CD14-positive monocyte (primary cell): ENCODE measurements at regions of chr14 and their contacts with region 1.

Region 1: GRCh38 chr14:70692226-70692625 is 50.5 kb downstream of the TTC9 start:
- DNase-seq: peak; percentile 83 to 91 (median 90)
- H3K4me3 ChIP-seq: no peak overlapping the region
- H3K4me3 Mint-ChIP-seq: peak overlapping the region in 1 of 2 donors; percentile 65
- H3K27ac ChIP-seq: peak overlapping the region; percentile 81 to 90
- H3K27ac Mint-ChIP-seq: peak overlapping the region; percentile 81 to 91 (median 88)
- H3K4me1 ChIP-seq: peaks cover 20 to 28% of the 10 kb centered on the region in 2 donors
- H3K4me1 Mint-ChIP-seq: peaks cover 20% of the 10 kb centered on the region
- H3K27me3 ChIP-seq: no peaks in the 10 kb centered on the region
- H3K27me3 Mint-ChIP-seq: peaks cover 0 to 2% (median 0%) of the 10 kb centered on the region in 3 donors
- CTCF ChIP-seq: no peak

Region 2: GRCh38 chr14:70640938-70641547 is 51.2 kb before region 1 on chr14:
- intact Hi-C with region 1: loop called in 1 of 2 experiments (anchors 5 kb)
- DNase-seq: peak in 2 of 3 donors; percentile 47 to 59
- H3K4me3 ChIP-seq: peak overlapping the region; percentile 36 to 87 (median 40)
- H3K4me3 Mint-ChIP-seq: peak overlapping the region; percentile 85 to 96
- H3K27ac ChIP-seq: no peak overlapping the region
- H3K27ac Mint-ChIP-seq: peak overlapping the region in 3 of 7 donors; percentile 14 to 65 (median 40)
- H3K4me1 ChIP-seq: peaks cover 25 to 27% of the 10 kb centered on the region in 2 donors
- H3K4me1 Mint-ChIP-seq: peaks cover 25% of the 10 kb centered on the region
- H3K27me3 ChIP-seq: peaks cover 28 to 55% of the 10 kb centered on the region in 2 donors
- H3K27me3 Mint-ChIP-seq: peaks cover 36 to 47% (median 42%) of the 10 kb centered on the region in 3 donors
- CTCF ChIP-seq: no peak

Region 3: DNA sequence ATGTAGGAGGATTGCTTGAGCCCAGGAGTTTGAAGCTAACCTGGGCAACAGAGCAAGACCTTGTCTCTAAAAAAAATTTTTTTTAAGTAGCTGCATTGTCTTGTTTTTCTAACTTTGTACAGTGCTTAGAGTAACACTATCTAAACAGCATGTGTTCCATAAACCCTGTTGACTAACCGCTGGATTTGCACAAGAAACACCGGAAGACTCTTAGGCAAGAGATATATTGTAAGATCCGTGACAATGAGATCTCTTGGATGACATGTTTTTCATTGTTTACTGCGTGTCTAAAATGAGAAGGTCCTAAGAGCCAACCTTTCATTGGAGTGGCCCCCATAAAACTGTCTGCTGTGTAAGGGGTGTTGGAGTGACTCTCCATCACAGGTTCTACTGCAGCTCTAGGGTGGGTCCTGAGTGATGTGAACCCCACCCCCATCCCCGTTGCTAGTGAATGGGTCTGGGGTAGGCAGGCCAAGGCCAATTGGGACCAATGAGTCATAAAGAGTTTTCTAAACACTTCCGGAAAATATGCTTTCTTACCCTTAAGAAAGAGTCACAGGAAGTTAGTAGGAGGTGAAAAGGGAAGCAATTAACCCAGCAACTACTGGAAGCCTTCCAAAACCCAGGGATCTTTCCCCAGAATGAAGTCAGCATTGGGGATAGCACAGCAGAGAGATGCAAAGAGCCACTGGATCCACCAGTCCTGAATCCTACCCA is 190.7 kb after region 1 on chr14:
- intact Hi-C with region 1: no loop called
- DNase-seq: peak; percentile 86 to 98 (median 96)
- H3K4me3 ChIP-seq: peak overlapping the region in 1 of 3 experiments; percentile 58
- H3K4me3 Mint-ChIP-seq: peak overlapping the region; percentile 50 to 72
- H3K27ac ChIP-seq: peak overlapping the region; percentile 87 to 99
- H3K27ac Mint-ChIP-seq: peak overlapping the region; percentile 98 to 100 (median 99)
- H3K4me1 ChIP-seq: peaks cover 85 to 90% of the 10 kb centered on the region in 2 donors
- H3K4me1 Mint-ChIP-seq: peaks cover 90% of the 10 kb centered on the region
- H3K27me3 ChIP-seq: no peaks in the 10 kb centered on the region
- H3K27me3 Mint-ChIP-seq: peaks cover 0 to 4% (median 1%) of the 10 kb centered on the region in 3 donors
- CTCF ChIP-seq: no peak